ENCODE measurements at regions of chr1 and their contacts with region 1.

Region 1: GRCh38 chr1:172357753-172358385 is 62.6 kb upstream of the C1orf105 start:
- DNase-seq: no peak

Region 2: DNA sequence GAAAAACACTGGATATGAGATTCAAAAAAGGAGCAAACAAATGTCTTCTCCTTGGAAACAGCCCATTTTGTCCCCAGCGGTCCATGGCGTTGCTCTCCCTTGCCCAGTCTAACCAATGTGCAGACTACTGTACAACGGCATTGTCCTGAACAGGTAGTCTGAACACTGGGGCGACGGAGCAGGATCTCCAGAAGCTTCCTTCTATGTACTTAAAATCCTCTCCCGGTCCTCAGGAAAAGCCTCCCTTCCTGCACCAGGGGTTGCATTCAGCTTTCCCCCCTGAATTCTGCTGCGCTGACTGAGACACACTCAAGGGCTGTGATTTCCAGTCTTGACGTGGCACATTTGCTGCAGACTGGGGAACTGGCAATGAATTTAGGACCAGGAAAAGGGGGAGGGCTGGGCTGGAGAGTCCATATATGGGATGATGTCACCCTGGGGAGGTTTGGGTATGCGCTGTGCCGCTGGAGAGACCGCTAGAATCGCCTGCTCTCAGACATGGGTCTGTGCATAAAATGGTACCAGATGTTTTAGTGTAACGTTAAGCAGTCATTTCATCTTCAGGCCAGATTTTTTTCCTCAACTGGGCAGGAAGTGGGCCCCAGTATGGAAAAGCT is 213.3 kb before region 1 on chr1:
- intact Hi-C with region 1: loop called (anchors 2 kb)
- DNase-seq: peak; percentile 81

Region 3: DNA sequence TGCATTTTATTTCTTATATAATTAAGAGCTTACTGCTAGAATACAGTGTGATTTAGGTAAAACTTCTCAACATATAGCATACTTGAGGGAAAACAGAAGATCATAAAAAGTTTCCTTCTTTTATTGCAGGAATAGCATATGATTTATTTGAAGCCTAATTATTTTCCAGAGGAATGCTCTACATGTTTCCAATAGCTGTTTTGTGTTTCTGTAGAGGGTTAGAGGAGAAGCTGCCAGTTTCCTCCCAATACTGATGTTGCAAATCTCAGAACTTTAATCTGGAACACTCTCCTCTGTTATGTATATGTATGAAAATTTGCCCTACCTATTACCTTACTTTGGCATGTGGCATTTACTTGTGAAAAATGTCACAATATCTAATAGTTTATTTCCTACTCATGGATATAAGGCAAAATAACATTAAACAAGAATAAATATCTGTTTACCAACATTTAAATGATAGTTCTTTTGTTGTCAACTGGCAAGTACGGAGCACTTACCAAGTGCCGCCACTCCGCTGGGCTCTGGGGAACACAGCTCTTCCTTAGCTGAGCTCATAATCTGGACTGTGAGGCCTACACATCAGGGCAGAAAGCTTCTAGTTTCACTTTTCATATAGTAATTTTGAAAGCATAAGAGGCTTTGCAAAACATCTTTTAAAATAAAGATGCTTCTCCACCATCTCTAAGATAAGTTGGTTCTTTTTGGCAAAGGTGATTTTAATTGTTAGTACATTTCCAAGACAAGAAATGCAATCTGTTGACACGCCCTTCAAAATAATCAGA is 177.2 kb before region 1 on chr1:
- intact Hi-C with region 1: loop called (anchors 5 kb)
- DNase-seq: no peak

Region 4: GRCh38 chr1:172278478-172278877 is 79.4 kb before region 1 on chr1:
- intact Hi-C with region 1: no loop called
- DNase-seq: no peak

Region 5: DNA sequence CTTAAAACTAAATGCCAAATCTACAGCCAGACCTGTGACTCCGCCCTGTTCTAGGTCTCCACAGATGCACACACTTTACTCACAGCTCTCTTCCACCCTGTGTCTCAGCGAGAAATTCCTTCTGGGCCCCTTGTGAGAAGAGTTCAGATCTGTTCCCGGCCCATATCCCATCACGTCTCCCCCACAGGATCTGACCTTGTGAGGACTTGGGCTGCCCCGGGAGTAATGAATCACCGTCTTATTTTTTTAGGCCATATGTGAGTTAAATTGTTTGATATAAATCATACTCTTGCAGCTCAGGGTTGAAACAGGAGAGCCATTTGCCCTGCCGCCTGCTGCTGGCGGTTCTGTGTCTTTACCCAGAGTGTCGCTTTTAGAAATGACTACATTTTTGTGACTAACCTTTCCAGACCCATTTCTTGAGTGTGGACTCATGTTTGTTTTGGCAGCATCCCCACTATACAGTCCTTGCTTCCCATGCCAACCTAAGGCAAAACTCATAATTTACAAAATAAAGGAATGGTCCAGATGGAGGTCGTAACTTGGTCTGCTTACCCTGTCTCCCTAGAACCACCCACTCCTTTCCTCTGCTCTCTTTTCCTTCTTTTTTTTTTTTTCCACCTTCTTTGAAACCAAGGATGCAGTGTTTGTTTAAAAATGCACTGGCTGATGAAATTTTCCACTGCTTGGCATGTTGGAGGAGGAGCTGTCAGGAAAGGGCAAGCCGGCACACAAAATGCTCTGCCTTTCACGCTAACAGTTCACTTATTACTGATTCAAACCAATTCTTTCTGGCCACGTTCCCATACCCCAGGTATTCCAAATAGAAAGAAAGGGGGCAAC is 35.4 kb before region 1 on chr1:
- intact Hi-C with region 1: loop called (anchors 1 kb)
- DNase-seq: no peak